ENCODE measurements at regions of chr2 and their contacts with region 1.

Region 1: GRCh38 chr2:101806123-101806522 is 108.6 kb downstream of the MAP4K4 start:
- DNase-seq: peak in 1 of 5 donors; percentile 28
- ATAC-seq: peak in 2 of 4 donors; percentile 55 to 68
- H3K4me3 ChIP-seq: peak overlapping the region in 2 of 12 donors; percentile 17 to 26
- H3K27ac ChIP-seq: peak overlapping the region; percentile 4 to 76 (median 51)
- H3K4me1 ChIP-seq: peaks cover 9 to 81% (median 64%) of the 10 kb centered on the region in 12 donors
- H3K27me3 ChIP-seq: no peaks in the 10 kb centered on the region
- CTCF ChIP-seq: no peak
- POLR2A ChIP-seq: no peak

Region 2: GRCh38 chr2:101770726-101771125 is 35.4 kb before region 1 on chr2:
- intact Hi-C with region 1: loop called in 1 of 10 experiments (anchors 5 kb)
- DNase-seq: no peak
- ATAC-seq: peak; percentile 11 to 44 (median 40)
- H3K4me3 ChIP-seq: no peak overlapping the region
- H3K27ac ChIP-seq: peak overlapping the region in 5 of 12 donors; percentile 2 to 14 (median 4)
- H3K4me1 ChIP-seq: peaks cover 8 to 100% (median 88%) of the 10 kb centered on the region in 12 donors
- H3K27me3 ChIP-seq: no peaks in the 10 kb centered on the region
- CTCF ChIP-seq: peak in 9 of 12 donors; percentile 33 to 55 (median 39)
- POLR2A ChIP-seq: no peak